Activated B cell treated with CpG ODN at 0.5 μM for 24 hours (primary cell): ENCODE measurements at regions of chr2 and their contacts with region 1.

Region 1: GRCh38 chr2:68774569-68775271 is 40.1 kb downstream of the ARHGAP25 start:
- DNase-seq: peak; percentile 71
- ATAC-seq: peak; percentile 78
- H3K4me3 Mint-ChIP-seq: peak overlapping the region; percentile 98
- H3K27ac Mint-ChIP-seq: peak overlapping the region; percentile 96
- H3K4me1 Mint-ChIP-seq: peaks cover 82% of the 10 kb centered on the region
- H3K27me3 Mint-ChIP-seq: no peaks in the 10 kb centered on the region
- CTCF ChIP-seq: no peak

Region 2: DNA sequence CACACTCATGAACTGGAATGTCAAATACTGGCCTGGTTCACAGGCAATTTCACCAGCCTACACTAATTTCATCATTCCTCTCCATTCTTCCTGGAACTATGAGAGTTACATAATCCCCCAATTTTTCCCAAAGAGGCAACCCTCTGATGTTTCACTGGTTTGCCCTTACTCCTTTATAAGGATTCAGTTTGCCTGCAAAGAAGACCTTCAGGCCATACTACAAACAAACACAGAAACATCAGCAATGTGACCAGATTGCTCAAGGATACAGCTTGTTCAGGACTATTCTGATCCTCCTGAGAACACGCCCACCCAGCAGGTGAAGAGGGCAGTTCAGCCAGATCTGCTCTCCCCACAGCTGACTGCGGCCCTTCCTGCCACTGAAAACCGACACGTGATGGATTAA is 1162.1 kb before region 1 on chr2:
- CTCF ChIA-PET with region 1: no interaction called
- POLR2A ChIA-PET with region 1: no interaction called
- intact Hi-C with region 1: no loop called
- DNase-seq: no peak
- ATAC-seq: no peak
- H3K4me3 Mint-ChIP-seq: no peak overlapping the region
- H3K27ac Mint-ChIP-seq: no peak overlapping the region
- H3K4me1 Mint-ChIP-seq: no peaks in the 10 kb centered on the region
- H3K27me3 Mint-ChIP-seq: peaks cover 2% of the 10 kb centered on the region
- CTCF ChIP-seq: no peak

Region 3: DNA sequence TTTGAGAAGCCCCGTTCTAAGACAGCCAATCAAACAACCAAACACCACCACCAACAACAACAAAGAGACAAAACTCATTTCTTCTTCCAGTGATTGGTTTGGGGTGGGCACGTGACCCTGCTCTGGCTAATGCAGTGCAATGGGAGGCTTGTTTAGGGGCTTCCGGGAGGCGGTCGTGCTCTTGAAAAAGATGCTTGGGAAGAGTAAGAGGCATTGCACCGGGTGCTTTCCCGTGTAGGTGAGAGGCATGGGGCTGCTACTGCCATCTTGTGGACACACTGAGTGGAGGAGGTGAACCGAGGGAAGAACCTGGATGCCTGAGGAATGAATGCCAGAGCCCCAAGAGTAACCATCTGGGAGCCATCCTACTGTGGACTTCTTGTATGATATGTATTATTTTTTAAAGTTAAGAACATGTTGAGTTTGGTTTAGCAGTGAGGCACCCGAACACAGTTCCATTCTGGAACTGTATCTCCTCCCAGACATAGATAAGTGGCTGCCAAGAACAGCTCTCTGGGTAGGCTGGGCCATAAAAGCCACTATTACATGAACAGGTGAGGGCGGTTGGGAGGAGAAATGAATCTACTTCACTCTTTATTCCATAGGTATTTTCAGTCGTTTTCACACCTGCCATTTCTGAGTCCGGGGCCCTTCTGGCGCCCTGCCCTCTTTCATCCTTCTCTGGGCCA is 59.2 kb before region 1 on chr2:
- CTCF ChIA-PET with region 1: interaction called, 3 read pairs
- POLR2A ChIA-PET with region 1: interaction called, 19 read pairs
- intact Hi-C with region 1: no loop called
- DNase-seq: no peak
- ATAC-seq: peak; percentile 51
- H3K4me3 Mint-ChIP-seq: peak overlapping the region; percentile 21
- H3K27ac Mint-ChIP-seq: peak overlapping the region; percentile 89
- H3K4me1 Mint-ChIP-seq: peaks cover 82% of the 10 kb centered on the region
- H3K27me3 Mint-ChIP-seq: no peaks in the 10 kb centered on the region
- CTCF ChIP-seq: no peak

Region 4: GRCh38 chr2:68726608-68727367 is 47.9 kb before region 1 on chr2:
- CTCF ChIA-PET with region 1: interaction called, 3 read pairs
- POLR2A ChIA-PET with region 1: interaction called, 43 read pairs
- intact Hi-C with region 1: loop called (anchors 2 kb)
- DNase-seq: peak; percentile 52
- ATAC-seq: peak; percentile 95
- H3K4me3 Mint-ChIP-seq: peak overlapping the region; percentile 29
- H3K27ac Mint-ChIP-seq: peak overlapping the region; percentile 78
- H3K4me1 Mint-ChIP-seq: peaks cover 49% of the 10 kb centered on the region
- H3K27me3 Mint-ChIP-seq: no peaks in the 10 kb centered on the region
- CTCF ChIP-seq: no peak

Region 5: DNA sequence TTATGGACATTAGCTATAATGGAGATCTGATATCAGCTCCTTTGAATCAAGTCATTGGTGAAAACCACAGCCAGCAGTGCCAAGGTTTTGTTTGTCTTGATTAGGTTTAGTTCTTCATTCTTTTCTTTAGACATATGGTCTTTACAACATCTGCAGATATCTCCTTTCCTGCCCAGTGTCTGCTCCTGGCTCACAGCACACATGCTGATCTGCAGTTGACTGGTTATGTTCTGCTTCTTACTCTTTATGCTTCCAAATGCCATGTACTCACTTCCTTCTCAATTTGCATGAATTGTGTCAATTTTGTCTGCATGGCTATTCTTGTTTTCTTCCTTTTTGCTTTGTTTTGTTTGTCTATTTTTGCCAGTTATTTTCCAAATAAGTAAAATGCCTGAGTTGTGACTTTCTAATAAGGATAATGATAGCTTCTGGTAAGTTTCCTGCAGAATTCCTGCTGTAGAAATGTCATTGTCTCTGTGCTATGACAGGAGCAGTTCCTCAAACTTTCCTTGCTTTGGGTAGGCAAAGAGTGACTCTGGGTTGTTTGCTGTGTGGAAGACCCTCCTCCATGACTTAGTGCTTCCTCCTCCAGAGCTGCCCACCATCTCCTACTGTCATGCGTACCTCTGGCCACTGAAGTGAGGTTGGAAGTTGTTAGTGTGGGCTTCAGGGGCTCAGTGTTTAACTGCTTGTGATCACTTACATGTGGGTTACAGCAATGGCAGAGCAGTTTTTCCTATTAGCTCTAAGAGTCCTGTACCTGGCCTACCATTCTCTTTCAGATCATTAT is 31.9 kb before region 1 on chr2:
- CTCF ChIA-PET with region 1: interaction called, 12 read pairs
- POLR2A ChIA-PET with region 1: interaction called, 60 read pairs
- intact Hi-C with region 1: no loop called
- DNase-seq: no peak
- ATAC-seq: peak; percentile 49
- H3K4me3 Mint-ChIP-seq: peak overlapping the region; percentile 55
- H3K27ac Mint-ChIP-seq: peak overlapping the region; percentile 87
- H3K4me1 Mint-ChIP-seq: peaks cover 91% of the 10 kb centered on the region
- H3K27me3 Mint-ChIP-seq: no peaks in the 10 kb centered on the region
- CTCF ChIP-seq: no peak

Region 6: DNA sequence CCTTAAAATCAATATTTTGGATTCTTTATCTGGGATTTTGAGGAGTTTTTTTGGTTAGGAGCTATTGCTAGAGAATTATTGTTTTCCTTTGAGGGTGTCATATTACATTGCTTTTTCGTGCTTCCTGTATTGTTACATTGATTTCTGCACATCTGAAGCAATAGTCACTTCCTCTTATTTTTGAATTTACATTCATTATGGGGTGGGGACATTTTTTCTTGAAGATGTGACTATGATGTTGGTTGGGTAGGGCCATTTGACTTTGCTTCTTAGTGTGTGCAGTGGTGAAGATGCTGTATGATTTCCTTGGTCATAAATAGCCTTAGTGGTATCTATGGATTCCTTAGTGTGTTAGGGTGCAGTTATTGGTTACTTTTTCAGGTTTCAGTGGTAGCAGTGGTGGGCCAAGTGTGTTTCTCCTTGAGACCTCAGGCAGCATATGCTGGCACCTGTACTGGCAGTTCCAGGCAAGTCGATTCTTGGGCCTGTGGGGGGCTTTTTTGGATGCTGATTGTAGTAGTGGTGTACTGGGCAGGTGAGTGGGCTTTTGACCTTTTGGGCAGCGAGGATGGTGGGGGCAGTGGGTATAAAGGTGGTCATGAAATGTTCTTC is 21.7 kb after region 1 on chr2:
- CTCF ChIA-PET with region 1: interaction called, 4 read pairs
- POLR2A ChIA-PET with region 1: interaction called, 1,418 read pairs
- intact Hi-C with region 1: no loop called
- DNase-seq: no peak
- ATAC-seq: peak; percentile 70
- H3K4me3 Mint-ChIP-seq: peak overlapping the region; percentile 68
- H3K27ac Mint-ChIP-seq: no peak overlapping the region
- H3K4me1 Mint-ChIP-seq: peaks cover 94% of the 10 kb centered on the region
- H3K27me3 Mint-ChIP-seq: no peaks in the 10 kb centered on the region
- CTCF ChIP-seq: no peak

Region 7: DNA sequence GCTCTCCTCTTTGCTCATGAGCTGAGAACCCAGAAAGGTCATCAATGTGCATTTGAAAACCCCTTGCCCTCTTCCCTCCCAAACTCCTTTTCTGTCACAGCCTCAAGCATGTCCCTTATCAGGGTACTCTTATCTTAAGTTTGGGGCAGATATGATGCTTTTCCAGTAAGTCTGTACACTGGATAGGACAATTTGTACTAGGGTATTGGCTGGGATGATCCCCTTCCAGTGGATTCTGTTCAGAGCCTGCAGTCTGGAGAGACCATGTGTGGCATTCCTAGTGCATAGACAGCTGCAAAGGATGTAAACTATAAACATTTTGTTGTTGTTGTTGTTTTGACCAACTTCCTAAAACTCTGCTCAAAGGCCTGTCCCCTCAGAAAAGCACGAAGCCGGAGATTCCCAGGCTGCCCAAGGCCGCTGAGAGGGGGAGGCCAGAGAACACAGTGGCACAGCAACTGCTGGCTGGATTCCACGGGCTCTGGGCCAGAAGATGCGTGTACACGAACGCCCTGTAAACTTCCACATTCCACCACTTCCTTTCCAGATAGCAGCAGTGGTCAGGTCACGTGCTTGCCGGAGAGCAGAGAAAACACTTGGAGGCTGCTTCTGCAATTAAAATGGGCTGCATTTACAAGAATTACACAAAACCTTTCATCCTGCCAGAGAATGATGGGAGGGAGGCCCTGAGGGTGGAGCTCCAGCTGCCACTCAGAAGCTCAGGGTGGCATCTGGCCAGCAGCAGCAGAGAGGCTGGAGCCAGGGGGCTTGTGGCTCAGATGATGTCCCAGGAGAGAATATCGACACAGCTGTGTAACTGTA is 54.4 kb after region 1 on chr2:
- CTCF ChIA-PET with region 1: interaction called, 5 read pairs
- POLR2A ChIA-PET with region 1: interaction called, 91 read pairs
- intact Hi-C with region 1: loop called (anchors 2 kb)
- DNase-seq: no peak
- ATAC-seq: peak; percentile 29
- H3K4me3 Mint-ChIP-seq: peak overlapping the region; percentile 8
- H3K27ac Mint-ChIP-seq: peak overlapping the region; percentile 76
- H3K4me1 Mint-ChIP-seq: peaks cover 78% of the 10 kb centered on the region
- H3K27me3 Mint-ChIP-seq: no peaks in the 10 kb centered on the region
- CTCF ChIP-seq: no peak